CD4-positive, alpha-beta memory T cell (primary cell): ENCODE measurements at regions of chr3 and their contacts with region 1.

Region 1: GRCh38 chr3:33131331-33132018 is 17.7 kb downstream of the CRTAP start:
- DNase-seq: peak in 4 of 5 donors; percentile 31 to 40 (median 35)
- H3K4me3 ChIP-seq: no peak overlapping the region
- H3K4me3 Mint-ChIP-seq: no peak overlapping the region
- H3K27ac ChIP-seq: no peak overlapping the region
- H3K27ac Mint-ChIP-seq: no peak overlapping the region
- H3K4me1 ChIP-seq: no peaks in the 10 kb centered on the region
- H3K4me1 Mint-ChIP-seq: peaks cover 0 to 8% (median 5%) of the 10 kb centered on the region in 4 donors
- H3K27me3 ChIP-seq: no peaks in the 10 kb centered on the region
- H3K27me3 Mint-ChIP-seq: no peaks in the 10 kb centered on the region

Region 2: DNA sequence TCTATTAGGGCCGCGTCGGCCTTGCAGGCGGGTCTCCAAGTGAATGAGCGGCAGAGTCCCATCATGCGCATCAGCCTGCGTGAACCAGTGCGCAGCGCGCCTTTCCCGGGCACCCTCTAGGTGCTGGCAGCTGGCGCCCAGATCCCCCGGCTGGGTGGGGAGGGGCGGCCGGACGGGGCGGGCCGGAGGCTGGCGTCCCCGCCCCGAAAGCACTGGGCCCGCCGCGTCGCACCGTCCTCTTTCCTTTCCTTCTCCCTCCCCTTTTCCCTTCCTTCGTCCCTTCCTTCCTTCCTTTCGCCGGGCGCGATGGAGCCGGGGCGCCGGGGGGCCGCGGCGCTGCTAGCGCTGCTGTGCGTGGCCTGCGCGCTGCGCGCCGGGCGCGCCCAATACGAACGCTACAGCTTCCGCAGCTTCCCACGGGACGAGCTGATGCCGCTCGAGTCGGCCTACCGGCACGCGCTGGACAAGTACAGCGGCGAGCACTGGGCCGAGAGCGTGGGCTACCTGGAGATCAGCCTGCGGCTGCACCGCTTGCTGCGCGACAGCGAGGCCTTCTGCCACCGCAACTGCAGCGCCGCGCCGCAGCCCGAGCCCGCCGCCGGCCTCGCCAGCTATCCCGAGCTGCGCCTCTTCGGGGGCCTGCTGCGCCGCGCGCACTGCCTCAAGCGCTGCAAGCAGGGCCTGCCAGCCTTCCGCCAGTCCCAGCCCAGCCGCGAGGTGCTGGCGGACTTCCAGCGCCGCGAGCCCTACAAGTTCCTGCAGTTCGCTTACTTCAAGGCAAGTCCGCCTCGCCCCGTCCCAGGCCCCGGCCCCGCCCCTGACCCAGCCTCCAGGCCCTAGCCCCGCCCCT is 17.5 kb before region 1 on chr3 and contains the start of gene CRTAP:
- CTCF ChIA-PET with region 1: interaction called, 17 read pairs
- POLR2A ChIA-PET with region 1: interaction called, 5 read pairs
- intact Hi-C with region 1: loop called (anchors 1 kb)
- DNase-seq: peak; percentile 85 to 88 (median 87)
- H3K4me3 ChIP-seq: peak within 1 kb of the TSS; percentile 71 to 83
- H3K4me3 Mint-ChIP-seq: peak within 1 kb of the TSS; percentile 83 to 92 (median 89)
- H3K27ac ChIP-seq: peak within 1 kb of the TSS; percentile 55
- H3K27ac Mint-ChIP-seq: peak within 1 kb of the TSS; percentile 75 to 94 (median 91)
- H3K4me1 ChIP-seq: peaks cover 42% of the 10 kb centered on the region
- H3K4me1 Mint-ChIP-seq: peaks cover 32 to 65% (median 48%) of the 10 kb centered on the region in 4 donors
- H3K27me3 ChIP-seq: no peaks in the 10 kb centered on the region
- H3K27me3 Mint-ChIP-seq: no peaks in the 10 kb centered on the region
- total RNA-seq, gene CRTAP: 75.4 to 84.4 TPM

Region 3: GRCh38 chr3:33144433-33144832 is 13.0 kb after region 1 on chr3:
- CTCF ChIA-PET with region 1: interaction called, 26 read pairs
- POLR2A ChIA-PET with region 1: no interaction called
- intact Hi-C with region 1: no loop called
- DNase-seq: peak in 3 of 5 donors; percentile 7 to 19 (median 13)
- H3K4me3 ChIP-seq: no peak overlapping the region
- H3K4me3 Mint-ChIP-seq: no peak overlapping the region
- H3K27ac ChIP-seq: no peak overlapping the region
- H3K27ac Mint-ChIP-seq: peak overlapping the region in 2 of 7 donors; percentile 17 to 55
- H3K4me1 ChIP-seq: no peaks in the 10 kb centered on the region
- H3K4me1 Mint-ChIP-seq: peaks cover 0 to 5% (median 1%) of the 10 kb centered on the region in 4 donors
- H3K27me3 ChIP-seq: no peaks in the 10 kb centered on the region
- H3K27me3 Mint-ChIP-seq: no peaks in the 10 kb centered on the region

Region 4: DNA sequence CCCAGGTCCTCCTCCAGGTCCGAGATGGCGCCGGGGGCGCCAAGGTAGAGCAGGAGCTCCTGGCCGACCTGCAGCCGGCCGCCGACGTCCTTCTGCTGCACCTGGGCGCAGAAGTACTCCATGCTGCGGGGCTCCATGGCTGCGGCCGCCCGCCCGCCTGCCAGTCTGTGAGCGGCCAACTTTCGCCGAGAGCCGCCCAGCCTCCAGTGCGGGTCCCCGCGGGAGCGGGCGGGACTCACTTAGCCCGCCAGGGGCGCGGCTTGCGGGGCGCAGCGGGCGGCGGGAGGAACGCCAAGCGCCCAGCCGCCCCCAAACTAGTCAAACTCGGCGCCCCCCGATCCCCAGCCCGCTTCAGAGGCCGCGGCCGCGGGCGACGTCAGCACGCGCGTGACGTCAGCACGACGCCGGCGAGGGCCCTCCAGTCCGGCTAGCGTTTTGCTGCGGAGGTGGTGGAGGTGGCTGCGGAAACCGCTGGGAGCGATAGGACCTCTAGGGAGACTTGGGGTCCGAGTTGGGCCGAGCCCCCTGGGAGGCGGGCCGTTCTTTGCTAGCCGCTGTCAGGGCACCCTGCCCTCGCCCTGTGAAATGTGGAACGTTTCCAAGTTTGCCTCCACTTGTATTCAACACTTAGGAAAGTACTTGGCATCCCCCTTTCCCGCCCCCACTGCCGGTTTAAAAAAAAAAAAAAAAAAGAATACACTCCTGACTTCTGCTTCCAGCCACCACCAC is 586.6 kb after region 1 on chr3 and contains the start of gene CLASP2:
- CTCF ChIA-PET with region 1: interaction called, 7 read pairs
- POLR2A ChIA-PET with region 1: no interaction called
- intact Hi-C with region 1: loop called (anchors 1 kb)
- DNase-seq: peak; percentile 86 to 89 (median 88)
- H3K4me3 ChIP-seq: peak within 1 kb of the TSS; percentile 53 to 88
- H3K4me3 Mint-ChIP-seq: peak within 1 kb of the TSS in 6 of 8 donors; percentile 92 to 99 (median 98)
- H3K27ac ChIP-seq: peak within 1 kb of the TSS; percentile 82
- H3K27ac Mint-ChIP-seq: peak within 1 kb of the TSS in 6 of 7 donors; percentile 96 to 99 (median 99)
- H3K4me1 ChIP-seq: peaks cover 27% of the 10 kb centered on the region
- H3K4me1 Mint-ChIP-seq: peaks cover 8 to 20% (median 13%) of the 10 kb centered on the region in 4 donors
- H3K27me3 ChIP-seq: no peaks in the 10 kb centered on the region
- H3K27me3 Mint-ChIP-seq: no peaks in the 10 kb centered on the region
- total RNA-seq, gene CLASP2: 62.1 to 63.0 TPM